ENCODE measurements at regions of chr3 and their contacts with region 1.

Region 1: DNA sequence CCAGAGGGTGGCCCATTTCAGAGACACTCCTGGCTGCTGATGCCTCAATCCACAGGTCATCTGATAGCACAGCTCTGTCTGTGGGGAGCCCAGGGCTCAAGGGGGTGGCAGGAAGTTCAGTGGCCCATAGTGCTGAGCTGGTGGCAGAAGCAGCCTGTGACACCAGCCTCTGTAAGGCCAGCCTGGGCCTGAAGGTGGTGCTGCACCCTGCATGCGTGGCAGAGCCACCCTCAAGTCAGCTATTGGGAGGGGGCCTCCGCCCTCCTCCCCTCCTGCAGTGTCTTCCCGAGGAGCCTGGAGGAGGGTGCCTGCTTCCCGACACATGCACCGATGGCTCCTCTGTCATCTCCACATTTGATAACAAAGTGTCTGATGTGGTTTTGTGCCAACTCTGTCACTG is 3.0 kb downstream of the PLA1A start:
- DNase-seq: peak; percentile 71
- CTCF ChIP-seq: peak; percentile 90

Region 2: GRCh38 chr3:119524931-119525662 is 75.6 kb before region 1 on chr3:
- CTCF ChIA-PET with region 1: no interaction called
- POLR2A ChIA-PET with region 1: no interaction called
- DNase-seq: no peak
- CTCF ChIP-seq: peak; percentile 40

Region 3: GRCh38 chr3:119559441-119559963 is 41.2 kb before region 1 on chr3 and contains the start of gene CD80:
- CTCF ChIA-PET with region 1: interaction called, 18 read pairs
- POLR2A ChIA-PET with region 1: interaction called, 7 read pairs
- DNase-seq: peak; percentile 65
- CTCF ChIP-seq: peak; percentile 67

Region 4: GRCh38 chr3:119579366-119580165 is 21.2 kb before region 1 on chr3 and contains the start of gene ADPRH:
- CTCF ChIA-PET with region 1: interaction called, 58 read pairs
- POLR2A ChIA-PET with region 1: interaction called, 7 read pairs
- DNase-seq: peak; percentile 83
- CTCF ChIP-seq: no peak

Region 5: DNA sequence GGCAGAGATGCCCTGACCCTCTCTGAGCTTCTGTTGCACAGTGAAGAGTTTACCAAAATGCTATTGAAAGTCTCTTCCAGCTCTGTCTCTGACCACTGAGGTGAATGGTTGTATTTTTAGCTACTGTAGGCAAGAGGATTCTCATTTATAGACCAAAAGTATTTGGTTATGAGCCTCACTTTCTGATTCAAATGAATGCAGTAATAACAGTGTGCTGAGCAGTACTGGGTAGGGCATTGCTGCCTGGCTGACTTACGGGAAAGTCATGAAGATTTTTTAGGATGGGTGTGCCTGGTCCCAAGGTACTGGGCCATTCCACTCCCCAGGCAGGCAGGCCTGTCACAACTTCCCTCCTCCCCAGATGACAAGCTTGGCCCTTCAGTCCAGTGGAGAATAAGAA is 12.5 kb after region 1 on chr3:
- CTCF ChIA-PET with region 1: interaction called, 56 read pairs
- POLR2A ChIA-PET with region 1: no interaction called
- DNase-seq: no peak
- CTCF ChIP-seq: no peak

Region 6: GRCh38 chr3:119628816-119629445 is 28.2 kb after region 1 on chr3:
- CTCF ChIA-PET with region 1: interaction called, 54 read pairs
- POLR2A ChIA-PET with region 1: interaction called, 4 read pairs
- DNase-seq: no peak
- CTCF ChIP-seq: no peak

Region 7: GRCh38 chr3:119643528-119643927 is 42.8 kb after region 1 on chr3:
- CTCF ChIA-PET with region 1: interaction called, 54 read pairs
- POLR2A ChIA-PET with region 1: interaction called, 4 read pairs
- DNase-seq: no peak
- CTCF ChIP-seq: no peak

Region 8: GRCh38 chr3:119676771-119677640 is 76.3 kb after region 1 on chr3 and contains the start of gene COX17:
- CTCF ChIA-PET with region 1: interaction called, 41 read pairs
- POLR2A ChIA-PET with region 1: interaction called, 5 read pairs
- DNase-seq: peak; percentile 96
- CTCF ChIP-seq: no peak

Region 9: GRCh38 chr3:119702530-119703157 is 101.9 kb after region 1 on chr3 and contains the start of gene CFAP91:
- CTCF ChIA-PET with region 1: no interaction called
- POLR2A ChIA-PET with region 1: no interaction called
- DNase-seq: peak; percentile 95
- CTCF ChIP-seq: no peak